Endothelial cell of umbilical vein (primary cell): ENCODE measurements at regions of chr12 and their contacts with region 1.

Region 1: GRCh38 chr12:15789220-15790171 is at the start of gene EPS8:
- DNase-seq: peak; percentile 94
- H3K4me3 ChIP-seq: peak within 1 kb of the TSS; percentile 49 to 83 (median 83)
- H3K27ac ChIP-seq: peak within 1 kb of the TSS; percentile 52
- H3K4me1 ChIP-seq: peaks cover 13% of the 10 kb centered on the region
- H3K27me3 ChIP-seq: no peaks in the 10 kb centered on the region
- CTCF ChIP-seq: no peak
- POLR2A ChIP-seq: peak; percentile 59
- total RNA-seq, gene EPS8: 11.9 and 12.1 TPM in 2 replicates

Region 2: GRCh38 chr12:15629108-15629507 is 160.4 kb before region 1 on chr12:
- CTCF ChIA-PET with region 1: no interaction called
- POLR2A ChIA-PET with region 1: no interaction called
- dilution Hi-C with region 1: no loop called
- intact Hi-C with region 1: loop called (anchors 2 kb)
- DNase-seq: peak; percentile 90
- H3K4me3 ChIP-seq: no peak overlapping the region
- H3K27ac ChIP-seq: peak overlapping the region; percentile 94
- H3K4me1 ChIP-seq: peaks cover 54% of the 10 kb centered on the region
- H3K27me3 ChIP-seq: no peaks in the 10 kb centered on the region
- CTCF ChIP-seq: no peak
- POLR2A ChIP-seq: no peak

Region 3: GRCh38 chr12:15741082-15741481 is 48.4 kb before region 1 on chr12:
- CTCF ChIA-PET with region 1: no interaction called
- POLR2A ChIA-PET with region 1: no interaction called
- dilution Hi-C with region 1: no loop called
- intact Hi-C with region 1: no loop called
- DNase-seq: no peak
- H3K4me3 ChIP-seq: no peak overlapping the region
- H3K27ac ChIP-seq: no peak overlapping the region
- H3K4me1 ChIP-seq: no peaks in the 10 kb centered on the region
- H3K27me3 ChIP-seq: no peaks in the 10 kb centered on the region
- CTCF ChIP-seq: no peak
- POLR2A ChIP-seq: no peak

Region 4: GRCh38 chr12:15772405-15773018 is 17.0 kb before region 1 on chr12:
- CTCF ChIA-PET with region 1: interaction called, 13 read pairs
- POLR2A ChIA-PET with region 1: no interaction called
- dilution Hi-C with region 1: no loop called
- intact Hi-C with region 1: no loop called
- DNase-seq: peak; percentile 29
- H3K4me3 ChIP-seq: no peak overlapping the region
- H3K27ac ChIP-seq: no peak overlapping the region
- H3K4me1 ChIP-seq: no peaks in the 10 kb centered on the region
- H3K27me3 ChIP-seq: no peaks in the 10 kb centered on the region
- CTCF ChIP-seq: peak; percentile 22 to 44
- POLR2A ChIP-seq: no peak